B cell (primary cell): ENCODE measurements at regions of chr9 and their contacts with region 1.

Region 1: GRCh38 chr9:68669218-68669617 is 35.8 kb upstream of the PIP5K1B start:
- DNase-seq: no peak
- ATAC-seq: no peak
- H3K4me3 ChIP-seq: no peak overlapping the region
- H3K4me3 Mint-ChIP-seq: no peak overlapping the region
- H3K27ac ChIP-seq: no peak overlapping the region
- H3K27ac Mint-ChIP-seq: no peak overlapping the region
- H3K4me1 ChIP-seq: peaks cover 2 to 6% of the 10 kb centered on the region in 2 donors
- H3K4me1 Mint-ChIP-seq: peaks cover 5% of the 10 kb centered on the region
- H3K27me3 ChIP-seq: no peaks in the 10 kb centered on the region
- H3K27me3 Mint-ChIP-seq: no peaks in the 10 kb centered on the region
- CTCF ChIP-seq: no peak

Region 2: DNA sequence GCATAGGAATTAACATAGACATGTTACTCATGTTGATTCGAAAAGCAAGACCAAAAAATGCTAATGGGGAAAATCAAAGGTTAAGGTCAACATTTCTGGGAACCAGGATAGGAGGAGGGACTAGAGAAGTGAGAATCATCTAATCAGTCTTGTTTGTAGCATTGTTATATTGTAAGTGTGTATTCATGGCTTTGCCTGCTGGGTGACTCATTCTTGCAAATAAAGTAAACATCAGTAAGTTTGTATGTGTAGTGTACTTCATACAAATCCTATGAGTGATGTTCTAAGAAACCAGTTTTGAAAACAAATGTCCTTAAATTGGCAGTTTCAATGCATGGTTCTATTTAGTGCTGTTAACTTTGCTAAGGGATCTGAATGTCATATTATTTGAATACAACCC is 49.6 kb before region 1 on chr9:
- CTCF ChIA-PET with region 1: no interaction called
- POLR2A ChIA-PET with region 1: no interaction called
- intact Hi-C with region 1: no loop called
- DNase-seq: no peak
- ATAC-seq: no peak
- H3K4me3 ChIP-seq: no peak overlapping the region
- H3K4me3 Mint-ChIP-seq: no peak overlapping the region
- H3K27ac ChIP-seq: no peak overlapping the region
- H3K27ac Mint-ChIP-seq: no peak overlapping the region
- H3K4me1 ChIP-seq: peaks cover 11 to 12% of the 10 kb centered on the region in 2 donors
- H3K4me1 Mint-ChIP-seq: peaks cover 14% of the 10 kb centered on the region
- H3K27me3 ChIP-seq: no peaks in the 10 kb centered on the region
- H3K27me3 Mint-ChIP-seq: no peaks in the 10 kb centered on the region
- CTCF ChIP-seq: no peak

Region 3: DNA sequence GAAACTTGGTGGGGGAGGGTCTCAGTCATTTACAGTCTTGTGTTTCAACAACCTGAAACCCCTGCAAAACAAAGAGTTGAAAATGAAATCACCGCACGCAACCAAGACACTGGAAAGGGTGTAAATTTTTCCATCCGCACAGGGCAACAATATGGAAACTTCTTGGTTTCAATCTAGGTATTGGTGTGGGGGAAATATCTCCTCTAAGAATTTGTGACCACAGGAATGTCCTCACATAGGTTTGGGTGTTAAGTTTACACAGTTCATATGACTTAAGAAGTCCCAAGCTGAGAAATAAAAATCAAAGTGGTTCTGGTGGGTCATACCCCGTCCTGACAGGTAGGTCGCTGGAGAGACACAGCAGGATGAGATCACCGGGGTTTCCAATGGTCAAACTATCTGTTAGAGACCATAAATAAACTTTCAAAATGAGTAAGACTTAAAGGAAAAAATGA is 16.1 kb before region 1 on chr9:
- CTCF ChIA-PET with region 1: no interaction called
- POLR2A ChIA-PET with region 1: no interaction called
- intact Hi-C with region 1: loop called (anchors 2 kb)
- DNase-seq: no peak
- ATAC-seq: peak; percentile 31
- H3K4me3 ChIP-seq: no peak overlapping the region
- H3K4me3 Mint-ChIP-seq: peak overlapping the region; percentile 56
- H3K27ac ChIP-seq: no peak overlapping the region
- H3K27ac Mint-ChIP-seq: no peak overlapping the region
- H3K4me1 ChIP-seq: peaks cover 16% of the 10 kb centered on the region in 2 donors
- H3K4me1 Mint-ChIP-seq: peaks cover 48% of the 10 kb centered on the region
- H3K27me3 ChIP-seq: no peaks in the 10 kb centered on the region
- H3K27me3 Mint-ChIP-seq: no peaks in the 10 kb centered on the region
- CTCF ChIP-seq: no peak

Region 4: GRCh38 chr9:68739621-68740174 is 70.5 kb after region 1 on chr9:
- CTCF ChIA-PET with region 1: no interaction called
- POLR2A ChIA-PET with region 1: no interaction called
- intact Hi-C with region 1: no loop called
- DNase-seq: no peak
- ATAC-seq: no peak
- H3K4me3 ChIP-seq: no peak overlapping the region
- H3K4me3 Mint-ChIP-seq: no peak overlapping the region
- H3K27ac ChIP-seq: no peak overlapping the region
- H3K27ac Mint-ChIP-seq: no peak overlapping the region
- H3K4me1 ChIP-seq: peaks cover 0 to 6% of the 10 kb centered on the region in 2 donors
- H3K4me1 Mint-ChIP-seq: peaks cover 26% of the 10 kb centered on the region
- H3K27me3 ChIP-seq: no peaks in the 10 kb centered on the region
- H3K27me3 Mint-ChIP-seq: no peaks in the 10 kb centered on the region
- CTCF ChIP-seq: no peak

Region 5: GRCh38 chr9:68808338-68808890 is 139.2 kb after region 1 on chr9:
- CTCF ChIA-PET with region 1: no interaction called
- POLR2A ChIA-PET with region 1: no interaction called
- intact Hi-C with region 1: no loop called
- DNase-seq: no peak
- ATAC-seq: no peak
- H3K4me3 ChIP-seq: no peak overlapping the region
- H3K4me3 Mint-ChIP-seq: no peak overlapping the region
- H3K27ac ChIP-seq: no peak overlapping the region
- H3K27ac Mint-ChIP-seq: no peak overlapping the region
- H3K4me1 ChIP-seq: peaks cover 25 to 29% of the 10 kb centered on the region in 2 donors
- H3K4me1 Mint-ChIP-seq: peaks cover 38% of the 10 kb centered on the region
- H3K27me3 ChIP-seq: no peaks in the 10 kb centered on the region
- H3K27me3 Mint-ChIP-seq: no peaks in the 10 kb centered on the region
- CTCF ChIP-seq: no peak